Right ventricle myocardium inferior (tissue), 1 donor: ENCODE measurements at regions of chr22 and their contacts with region 1.

Region 1: DNA sequence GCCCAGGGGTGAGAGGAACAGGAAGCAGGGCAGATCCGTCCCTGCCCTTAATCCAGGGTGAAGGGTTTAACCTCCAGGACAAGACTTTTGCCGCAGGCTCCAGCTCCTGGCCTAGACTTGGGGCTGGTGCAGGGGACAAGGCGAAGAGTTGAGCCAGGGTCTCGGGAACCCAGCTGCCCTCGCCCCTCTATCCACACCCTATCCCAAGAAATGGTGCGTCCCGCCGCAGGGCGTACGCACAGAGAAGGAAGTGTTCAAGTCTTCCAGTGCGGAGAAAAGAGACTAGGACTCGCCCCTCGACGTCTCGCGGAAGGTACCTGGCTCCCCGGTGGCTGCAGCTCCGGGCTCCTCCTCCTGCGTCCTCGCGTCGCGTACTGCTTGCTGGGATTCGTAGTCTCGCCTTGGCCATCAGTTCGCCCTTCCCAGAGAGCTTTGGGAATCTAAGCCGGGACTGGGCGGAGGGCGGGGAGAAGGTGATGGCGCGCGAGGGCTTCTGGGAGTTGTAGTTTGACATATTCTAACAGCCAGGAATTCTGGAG is at the start of gene ZMAT5:
- DNase-seq: peak; percentile 96
- ATAC-seq: peak; percentile 98
- total RNA-seq, gene ZMAT5: 21.7 TPM

Region 2: GRCh38 chr22:29816128-29816527 is 49.4 kb after region 1 on chr22:
- intact Hi-C with region 1: loop called (anchors 5 kb)
- DNase-seq: peak; percentile 82
- ATAC-seq: peak; percentile 90

Region 3: GRCh38 chr22:29830585-29830984 is 63.9 kb after region 1 on chr22:
- intact Hi-C with region 1: loop called (anchors 5 kb)
- DNase-seq: no peak
- ATAC-seq: peak; percentile 82

Region 4: DNA sequence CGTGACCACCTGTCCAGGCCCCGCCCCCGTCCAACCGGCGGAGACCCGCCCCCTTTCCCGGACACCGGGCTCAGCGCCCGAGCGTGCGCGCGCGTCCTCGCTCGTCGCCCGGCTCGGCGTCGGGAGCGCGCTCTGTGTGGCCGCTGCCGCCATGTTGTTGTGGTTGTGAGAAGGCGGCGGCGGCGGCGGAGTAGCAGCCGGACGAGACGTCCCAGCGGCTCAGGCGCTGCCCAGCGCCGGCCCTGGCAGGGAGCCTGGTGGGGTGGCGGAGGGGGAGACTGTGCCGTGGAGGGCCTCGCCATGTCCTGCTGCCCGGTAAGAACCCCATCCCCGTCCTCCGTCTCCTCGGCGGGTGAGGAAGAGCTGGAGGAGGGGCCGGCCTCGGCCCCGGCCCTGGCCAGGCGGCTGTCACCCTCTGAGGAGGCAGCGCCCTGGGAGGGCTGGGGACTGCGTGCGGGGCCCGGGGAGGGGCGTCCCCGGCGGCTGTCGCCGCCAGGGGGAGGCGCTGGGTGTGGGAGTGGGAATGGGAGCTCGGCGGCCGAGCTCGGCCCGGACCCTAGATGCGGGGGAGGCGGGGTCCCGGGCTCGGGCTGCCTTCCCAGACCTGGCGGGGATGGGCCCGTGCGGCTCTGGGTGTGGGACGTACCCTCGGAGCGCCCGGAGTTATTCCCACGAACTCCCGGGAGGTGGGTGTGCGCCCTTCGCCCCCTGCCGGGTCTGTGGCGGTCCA is 116.5 kb after region 1 on chr22 and contains the start of gene MTMR3:
- intact Hi-C with region 1: loop called (anchors 5 kb)
- DNase-seq: peak; percentile 98
- ATAC-seq: peak; percentile 91
- total RNA-seq, gene MTMR3: 32.3 TPM

Region 5: GRCh38 chr22:30005213-30005857 is 238.6 kb after region 1 on chr22:
- intact Hi-C with region 1: loop called (anchors 5 kb)
- DNase-seq: no peak
- ATAC-seq: peak; percentile 84